CD4-positive, alpha-beta T cell (primary cell): ENCODE measurements at regions of chr16 and their contacts with region 1.

Region 1: GRCh38 chr16:61606581-61606980 is 429.7 kb downstream of the CDH8 start:
- DNase-seq: no peak
- ATAC-seq: no peak
- H3K4me3 ChIP-seq: no peak overlapping the region
- H3K4me3 Mint-ChIP-seq: no peak overlapping the region
- H3K27ac ChIP-seq: no peak overlapping the region
- H3K27ac Mint-ChIP-seq: no peak overlapping the region
- H3K4me1 ChIP-seq: no peaks in the 10 kb centered on the region
- H3K4me1 Mint-ChIP-seq: no peaks in the 10 kb centered on the region
- H3K27me3 ChIP-seq: no peaks in the 10 kb centered on the region
- H3K27me3 Mint-ChIP-seq: no peaks in the 10 kb centered on the region
- CTCF ChIP-seq: no peak

Region 2: GRCh38 chr16:61654962-61655361 is 48.4 kb after region 1 on chr16:
- CTCF ChIA-PET with region 1: no interaction called
- POLR2A ChIA-PET with region 1: no interaction called
- intact Hi-C with region 1: loop called in 1 of 2 experiments (anchors 10 kb)
- DNase-seq: no peak
- ATAC-seq: no peak
- H3K4me3 ChIP-seq: no peak overlapping the region
- H3K4me3 Mint-ChIP-seq: no peak overlapping the region
- H3K27ac ChIP-seq: no peak overlapping the region
- H3K27ac Mint-ChIP-seq: no peak overlapping the region
- H3K4me1 ChIP-seq: no peaks in the 10 kb centered on the region
- H3K4me1 Mint-ChIP-seq: no peaks in the 10 kb centered on the region
- H3K27me3 ChIP-seq: no peaks in the 10 kb centered on the region
- H3K27me3 Mint-ChIP-seq: no peaks in the 10 kb centered on the region
- CTCF ChIP-seq: no peak